ENCODE measurements at regions of chr1 and their contacts with region 1.

Region 1: GRCh38 chr1:41277371-41277975 is 35.4 kb upstream of the SCMH1 start:
- DNase-seq: no peak
- H3K4me3 ChIP-seq: no peak overlapping the region
- H3K27me3 ChIP-seq: peaks cover 13% of the 10 kb centered on the region
- CTCF ChIP-seq: no peak

Region 2: DNA sequence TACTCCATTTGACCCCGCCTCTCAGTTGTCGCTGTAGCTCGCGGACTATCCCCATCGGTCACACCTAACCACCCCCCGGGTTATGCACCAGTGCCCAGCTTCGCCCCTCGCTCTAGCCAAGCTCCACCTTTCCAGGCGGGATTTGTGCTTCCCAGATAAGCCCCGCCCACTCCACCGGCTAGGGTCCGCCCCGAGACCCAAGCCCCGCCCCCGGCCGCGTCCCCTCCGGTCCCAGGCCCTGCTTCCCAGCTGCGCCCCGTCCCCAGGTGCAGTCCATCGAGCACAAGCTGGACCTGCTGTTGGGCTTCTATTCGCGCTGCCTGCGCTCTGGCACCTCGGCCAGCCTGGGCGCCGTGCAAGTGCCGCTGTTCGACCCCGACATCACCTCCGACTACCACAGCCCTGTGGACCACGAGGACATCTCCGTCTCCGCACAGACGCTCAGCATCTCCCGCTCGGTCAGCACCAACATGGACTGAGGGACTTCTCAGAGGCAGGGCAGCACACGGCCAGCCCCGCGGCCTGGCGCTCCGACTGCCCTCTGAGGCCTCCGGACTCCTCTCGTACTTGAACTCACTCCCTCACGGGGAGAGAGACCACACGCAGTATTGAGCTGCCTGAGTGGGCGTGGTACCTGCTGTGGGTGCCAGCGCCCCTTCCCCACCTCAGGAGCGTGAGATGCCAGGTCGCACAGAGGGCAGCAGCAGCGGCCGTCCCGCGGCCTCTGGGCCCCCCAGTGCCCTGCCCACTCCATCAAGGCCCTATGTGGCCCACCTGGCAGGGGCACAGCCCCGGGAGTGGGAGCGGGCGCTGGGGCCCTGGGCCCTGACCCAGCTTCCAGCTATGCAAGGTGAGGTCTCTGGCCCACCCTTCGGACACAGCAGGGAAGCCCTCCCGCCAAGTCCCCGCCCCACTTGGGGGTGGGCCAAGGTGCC is 439.2 kb before region 1 on chr1:
- CTCF ChIA-PET with region 1: no interaction called
- POLR2A ChIA-PET with region 1: interaction called, 13 read pairs
- DNase-seq: no peak
- H3K4me3 ChIP-seq: no peak overlapping the region
- H3K27me3 ChIP-seq: peaks cover 5% of the 10 kb centered on the region
- CTCF ChIP-seq: no peak

Region 3: DNA sequence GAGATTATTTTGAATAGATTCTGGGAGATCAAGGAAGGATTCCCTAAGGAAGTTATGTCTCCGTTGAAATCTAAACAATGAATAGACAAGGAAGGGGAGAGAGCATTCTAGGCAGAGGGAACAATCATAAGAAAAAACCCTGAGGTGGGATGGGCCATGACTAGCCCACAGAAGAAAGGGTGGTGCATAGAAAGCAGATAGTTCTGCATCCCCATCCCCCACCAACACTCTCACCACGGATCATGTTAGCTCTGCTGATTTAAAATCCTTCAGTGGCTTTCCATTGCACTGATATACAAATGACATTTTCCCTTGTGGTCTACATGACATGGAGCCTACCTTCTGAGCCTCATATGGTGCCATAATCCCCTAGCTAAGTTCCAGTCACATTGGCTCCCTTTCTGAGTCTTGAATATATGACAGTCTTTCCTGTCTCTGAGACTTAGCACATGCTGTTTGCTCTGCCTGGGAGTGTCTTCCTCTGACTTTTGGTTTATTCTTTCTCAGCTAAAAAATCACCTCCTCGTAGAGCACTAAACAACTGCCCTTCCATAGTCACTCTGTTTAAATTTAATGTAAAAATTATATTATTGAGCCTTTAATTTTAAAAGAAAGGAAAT is 50.5 kb before region 1 on chr1:
- CTCF ChIA-PET with region 1: no interaction called
- POLR2A ChIA-PET with region 1: no interaction called
- DNase-seq: no peak
- H3K4me3 ChIP-seq: no peak overlapping the region
- H3K27me3 ChIP-seq: no peaks in the 10 kb centered on the region
- CTCF ChIP-seq: no peak